IMR-90 (cell line): ENCODE measurements at regions of chr12 and their contacts with region 1.

Region 1: GRCh38 chr12:76031537-76032073 is at the start of gene PHLDA1:
- DNase-seq: peak; percentile 97
- ATAC-seq: peak; percentile 81
- H3K4me3 ChIP-seq: peak within 1 kb of the TSS; percentile 98
- H3K27ac ChIP-seq: peak within 1 kb of the TSS; percentile 98
- H3K4me1 ChIP-seq: peaks cover 7% of the 10 kb centered on the region
- H3K27me3 ChIP-seq: no peaks in the 10 kb centered on the region
- CTCF ChIP-seq: peak; percentile 74
- POLR2A ChIP-seq: peak; percentile 100
- RAD21 ChIP-seq: peak; percentile 73
- total RNA-seq, gene PHLDA1: 27.8 and 47.8 TPM in 2 replicates

Region 2: GRCh38 chr12:75334384-75335030 is 697.1 kb before region 1 on chr12 and contains the start of gene GLIPR1L1:
- CTCF ChIA-PET with region 1: no interaction called
- POLR2A ChIA-PET with region 1: no interaction called
- dilution Hi-C with region 1: no loop called
- in situ Hi-C with region 1: loop called (anchors 25 kb)
- intact Hi-C with region 1: loop called (anchors 5 kb)
- DNase-seq: peak; percentile 89
- ATAC-seq: peak; percentile 85
- H3K4me3 ChIP-seq: peak within 1 kb of the TSS; percentile 68
- H3K27ac ChIP-seq: peak within 1 kb of the TSS; percentile 53
- H3K4me1 ChIP-seq: no peaks in the 10 kb centered on the region
- H3K27me3 ChIP-seq: no peaks in the 10 kb centered on the region
- CTCF ChIP-seq: peak; percentile 85
- POLR2A ChIP-seq: no peak
- RAD21 ChIP-seq: peak; percentile 75
- total RNA-seq, gene GLIPR1L1: not detected in 2 replicates

Region 3: GRCh38 chr12:75623631-75624118 is 407.9 kb before region 1 on chr12:
- CTCF ChIA-PET with region 1: interaction called, 4 read pairs
- POLR2A ChIA-PET with region 1: no interaction called
- dilution Hi-C with region 1: no loop called
- in situ Hi-C with region 1: no loop called
- intact Hi-C with region 1: loop called (anchors 5 kb)
- DNase-seq: peak; percentile 33
- ATAC-seq: peak; percentile 48
- H3K4me3 ChIP-seq: no peak overlapping the region
- H3K27ac ChIP-seq: no peak overlapping the region
- H3K4me1 ChIP-seq: peaks cover 3% of the 10 kb centered on the region; the same call in 1 of the 2 replicates
- H3K27me3 ChIP-seq: no peaks in the 10 kb centered on the region
- CTCF ChIP-seq: peak; percentile 40
- POLR2A ChIP-seq: no peak
- RAD21 ChIP-seq: peak; percentile 43

Region 4: GRCh38 chr12:75814851-75815754 is 216.5 kb before region 1 on chr12:
- CTCF ChIA-PET with region 1: interaction called, 4 read pairs
- POLR2A ChIA-PET with region 1: no interaction called
- dilution Hi-C with region 1: no loop called
- in situ Hi-C with region 1: loop called (anchors 5 kb)
- intact Hi-C with region 1: no loop called
- DNase-seq: peak; percentile 98
- ATAC-seq: peak; percentile 77
- H3K4me3 ChIP-seq: no peak overlapping the region
- H3K27ac ChIP-seq: peak overlapping the region; percentile 79
- H3K4me1 ChIP-seq: peaks cover 32% of the 10 kb centered on the region
- H3K27me3 ChIP-seq: no peaks in the 10 kb centered on the region
- CTCF ChIP-seq: no peak
- POLR2A ChIP-seq: peak; percentile 3; the same call in 1 of the 2 replicates
- RAD21 ChIP-seq: peak; percentile 36

Region 5: DNA sequence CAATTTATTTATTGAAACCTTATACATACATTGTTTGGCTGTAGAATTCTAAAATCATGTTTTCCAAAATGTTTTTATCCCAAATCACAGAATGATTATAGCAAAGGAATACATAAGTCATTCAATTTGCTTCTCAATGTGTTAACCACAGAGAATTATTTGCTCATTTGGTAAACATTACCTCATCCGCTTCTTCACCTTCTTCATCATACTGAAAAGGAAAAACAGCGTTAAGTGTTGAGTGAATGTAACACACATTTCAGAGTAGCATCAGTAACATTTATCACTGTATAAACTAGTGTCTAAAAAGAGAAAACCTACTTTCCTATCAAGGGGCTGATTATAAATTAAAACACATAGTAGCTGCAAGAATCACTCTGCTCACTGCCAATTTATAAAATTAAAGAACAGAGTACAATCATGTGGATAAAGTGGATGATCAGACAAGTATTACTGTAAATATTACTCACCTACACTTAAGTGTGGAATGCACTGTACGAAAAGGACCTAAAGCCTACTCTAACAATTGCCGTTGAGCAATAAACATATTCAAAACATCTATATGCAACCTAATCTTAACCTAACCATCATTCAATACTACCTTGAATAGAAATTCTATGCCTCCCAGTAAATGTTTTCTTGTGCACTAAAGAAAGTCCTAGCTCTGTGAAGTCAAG is 18.1 kb after region 1 on chr12:
- CTCF ChIA-PET with region 1: no interaction called
- POLR2A ChIA-PET with region 1: no interaction called
- dilution Hi-C with region 1: no loop called
- in situ Hi-C with region 1: no loop called
- intact Hi-C with region 1: no loop called
- DNase-seq: no peak
- ATAC-seq: no peak
- H3K4me3 ChIP-seq: no peak overlapping the region
- H3K27ac ChIP-seq: no peak overlapping the region
- H3K4me1 ChIP-seq: peaks cover 4% of the 10 kb centered on the region
- H3K27me3 ChIP-seq: no peaks in the 10 kb centered on the region
- CTCF ChIP-seq: no peak
- POLR2A ChIP-seq: no peak
- RAD21 ChIP-seq: no peak

Region 6: DNA sequence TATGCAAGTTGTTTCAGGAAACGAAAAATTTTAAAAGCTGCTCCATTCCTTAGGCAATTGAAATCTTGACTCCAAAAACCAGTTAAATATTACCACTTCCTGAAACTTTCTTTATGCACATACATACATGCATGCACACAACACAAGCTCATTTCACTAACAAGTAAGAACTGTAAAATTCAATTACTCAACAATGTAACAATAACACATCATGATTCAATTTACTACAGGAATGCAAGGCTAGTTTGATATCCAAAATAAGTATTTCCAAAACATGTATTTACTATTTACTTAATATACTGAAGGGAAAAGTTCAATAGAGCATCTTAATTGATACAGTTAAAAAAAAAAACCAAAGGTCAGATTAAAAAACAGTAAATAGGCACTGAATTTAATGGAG is 33.3 kb after region 1 on chr12:
- CTCF ChIA-PET with region 1: no interaction called
- POLR2A ChIA-PET with region 1: no interaction called
- dilution Hi-C with region 1: no loop called
- in situ Hi-C with region 1: no loop called
- intact Hi-C with region 1: no loop called
- DNase-seq: no peak
- ATAC-seq: no peak
- H3K4me3 ChIP-seq: no peak overlapping the region
- H3K27ac ChIP-seq: no peak overlapping the region
- H3K4me1 ChIP-seq: no peaks in the 10 kb centered on the region
- H3K27me3 ChIP-seq: no peaks in the 10 kb centered on the region
- CTCF ChIP-seq: no peak
- POLR2A ChIP-seq: no peak
- RAD21 ChIP-seq: no peak

Region 7: DNA sequence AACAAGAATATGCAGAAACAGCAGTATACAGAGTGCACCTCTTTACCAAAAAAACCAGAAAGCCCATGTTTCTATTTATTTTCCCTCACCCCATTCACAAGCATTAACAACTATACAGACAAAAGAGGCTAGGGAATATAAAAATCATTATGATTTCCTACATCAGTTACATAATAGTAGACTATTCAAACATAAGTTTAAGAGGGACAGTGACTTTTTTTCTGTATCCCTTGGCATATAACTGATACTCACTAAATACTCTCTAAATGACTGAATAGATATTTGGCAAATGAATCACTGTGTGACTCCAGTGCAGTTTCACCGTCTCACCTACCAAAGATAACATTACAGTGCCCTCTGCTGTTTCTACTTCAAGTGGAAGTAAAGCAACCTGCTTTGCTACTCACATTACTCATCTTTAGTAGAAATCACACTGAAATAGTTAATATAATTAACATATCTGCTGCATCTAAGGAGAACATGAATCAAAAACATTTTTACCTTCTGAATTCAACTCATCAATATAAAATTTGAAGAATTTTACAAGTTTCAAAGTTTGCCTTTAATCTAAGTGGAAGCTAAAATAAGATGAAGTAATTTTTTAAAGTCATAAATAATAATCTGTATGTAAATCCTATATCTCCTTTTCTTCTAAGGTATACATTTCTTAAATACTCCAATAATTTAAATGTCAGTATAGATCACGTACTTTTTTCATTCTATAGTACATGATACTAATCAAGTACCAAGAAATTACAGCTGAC is 424.2 kb after region 1 on chr12:
- CTCF ChIA-PET with region 1: no interaction called
- POLR2A ChIA-PET with region 1: interaction called, 3 read pairs
- dilution Hi-C with region 1: no loop called
- in situ Hi-C with region 1: no loop called
- intact Hi-C with region 1: loop called (anchors 1 kb)
- DNase-seq: peak; percentile 95
- ATAC-seq: peak; percentile 95
- H3K4me3 ChIP-seq: no peak overlapping the region
- H3K27ac ChIP-seq: no peak overlapping the region
- H3K4me1 ChIP-seq: peaks cover 2% of the 10 kb centered on the region; the same call in 1 of the 2 replicates
- H3K27me3 ChIP-seq: no peaks in the 10 kb centered on the region
- CTCF ChIP-seq: peak; percentile 79
- POLR2A ChIP-seq: no peak
- RAD21 ChIP-seq: peak; percentile 83